ENCODE measurements at regions of chr1 and their contacts with region 1.

Region 1: GRCh38 chr1:152459596-152460528 is 45.8 kb upstream of the CRNN start:
- DNase-seq: peak; percentile 55 to 81 (median 61)
- H3K4me3 ChIP-seq: peak overlapping the region; percentile 36
- H3K4me3 Mint-ChIP-seq: peak overlapping the region; percentile 5 to 84 (median 72)
- H3K27ac ChIP-seq: no peak overlapping the region
- H3K27ac Mint-ChIP-seq: peak overlapping the region; percentile 25 to 98 (median 87)
- H3K4me1 ChIP-seq: peaks cover 15% of the 10 kb centered on the region
- H3K4me1 Mint-ChIP-seq: peaks cover 22 to 31% (median 29%) of the 10 kb centered on the region in 3 donors
- H3K27me3 ChIP-seq: no peaks in the 10 kb centered on the region
- H3K27me3 Mint-ChIP-seq: peaks cover 0 to 8% of the 10 kb centered on the region in 2 donors

Region 2: DNA sequence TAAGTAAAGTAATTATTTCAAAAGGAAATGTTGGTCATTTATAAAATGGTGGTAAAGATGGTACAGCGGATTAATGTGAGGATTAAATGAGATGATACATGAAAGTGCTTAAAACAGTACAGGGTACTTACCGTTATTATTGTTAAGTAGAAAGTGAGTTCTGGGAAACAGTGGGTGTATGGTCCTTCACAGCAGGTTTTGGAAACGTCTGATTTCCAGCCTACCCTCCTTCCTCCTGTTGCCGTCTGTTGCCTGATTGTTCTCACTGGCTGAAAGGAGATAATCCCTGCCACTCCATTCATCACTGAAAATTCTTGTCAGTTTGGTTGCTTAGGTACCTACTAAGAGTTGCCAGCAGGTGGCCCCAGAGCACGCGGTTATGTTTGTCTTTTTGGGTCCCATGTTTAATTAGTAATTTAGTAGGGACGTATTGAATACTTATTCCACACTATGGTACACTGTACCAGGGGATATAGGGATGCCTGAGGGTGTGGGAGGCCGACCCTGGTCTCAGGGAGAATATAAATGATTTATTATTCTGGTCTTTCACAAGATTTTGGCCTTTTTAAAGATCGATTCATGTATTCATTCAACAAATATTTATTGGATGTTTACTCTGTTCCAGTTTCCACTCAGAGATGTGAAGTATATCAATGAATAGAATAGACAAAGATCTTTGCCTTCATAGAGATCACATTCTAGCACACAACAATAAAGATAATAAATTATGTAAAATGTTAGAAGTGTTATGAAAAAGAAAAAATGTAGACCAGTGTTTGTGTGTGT is 270.0 kb before region 1 on chr1:
- CTCF ChIA-PET with region 1: interaction called, 146 read pairs
- POLR2A ChIA-PET with region 1: interaction called, 6 read pairs
- DNase-seq: peak; percentile 45 to 74 (median 50)
- H3K4me3 ChIP-seq: peak overlapping the region; percentile 57
- H3K4me3 Mint-ChIP-seq: peak overlapping the region; percentile 78 to 91 (median 84)
- H3K27ac ChIP-seq: no peak overlapping the region
- H3K27ac Mint-ChIP-seq: peak overlapping the region in 4 of 8 donors; percentile 5 to 70 (median 47)
- H3K4me1 ChIP-seq: peaks cover 5% of the 10 kb centered on the region
- H3K4me1 Mint-ChIP-seq: peaks cover 5 to 15% (median 10%) of the 10 kb centered on the region in 3 donors
- H3K27me3 ChIP-seq: no peaks in the 10 kb centered on the region
- H3K27me3 Mint-ChIP-seq: peaks cover 0 to 3% of the 10 kb centered on the region in 2 donors

Region 3: DNA sequence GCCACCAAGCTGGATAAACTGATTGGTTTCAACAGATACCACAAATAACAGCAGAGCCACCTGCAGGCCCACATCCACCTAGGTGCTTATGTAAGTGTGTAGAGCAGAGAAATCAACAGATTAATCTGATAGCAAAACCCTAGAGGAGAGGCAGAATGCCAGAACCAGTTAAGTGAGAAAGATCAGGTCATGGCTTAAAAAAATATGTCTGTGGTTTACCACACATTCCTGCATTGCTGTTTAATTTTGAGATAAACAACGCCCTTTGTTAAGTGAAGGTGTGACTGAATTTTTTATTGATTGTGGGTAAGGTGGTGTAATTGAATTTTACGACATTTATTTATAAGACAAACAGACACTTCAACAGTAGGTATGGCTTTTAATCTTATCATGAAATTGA is 67.0 kb before region 1 on chr1:
- CTCF ChIA-PET with region 1: interaction called, 36 read pairs
- POLR2A ChIA-PET with region 1: no interaction called
- DNase-seq: peak in 2 of 5 donors; percentile 53 to 62
- H3K4me3 ChIP-seq: no peak overlapping the region
- H3K4me3 Mint-ChIP-seq: peak overlapping the region in 5 of 7 donors; percentile 3 to 36 (median 30)
- H3K27ac ChIP-seq: no peak overlapping the region
- H3K27ac Mint-ChIP-seq: peak overlapping the region in 4 of 8 donors; percentile 10 to 85 (median 50)
- H3K4me1 ChIP-seq: peaks cover 4% of the 10 kb centered on the region
- H3K4me1 Mint-ChIP-seq: peaks cover 30 to 38% (median 33%) of the 10 kb centered on the region in 3 donors
- H3K27me3 ChIP-seq: peaks cover 6% of the 10 kb centered on the region
- H3K27me3 Mint-ChIP-seq: peaks cover 20 to 33% of the 10 kb centered on the region in 2 donors

Region 4: GRCh38 chr1:152440635-152441471 is 19.0 kb before region 1 on chr1:
- CTCF ChIA-PET with region 1: interaction called, 29 read pairs
- POLR2A ChIA-PET with region 1: no interaction called
- DNase-seq: peak; percentile 40 to 80 (median 52)
- H3K4me3 ChIP-seq: no peak overlapping the region
- H3K4me3 Mint-ChIP-seq: no peak overlapping the region
- H3K27ac ChIP-seq: no peak overlapping the region
- H3K27ac Mint-ChIP-seq: peak overlapping the region in 2 of 8 donors; percentile 39 to 79
- H3K4me1 ChIP-seq: no peaks in the 10 kb centered on the region
- H3K4me1 Mint-ChIP-seq: peaks cover 3 to 6% (median 4%) of the 10 kb centered on the region in 3 donors
- H3K27me3 ChIP-seq: no peaks in the 10 kb centered on the region
- H3K27me3 Mint-ChIP-seq: peaks cover 10 to 32% of the 10 kb centered on the region in 2 donors

Region 5: GRCh38 chr1:152473887-152474537 is 14.2 kb after region 1 on chr1:
- CTCF ChIA-PET with region 1: interaction called, 11 read pairs
- POLR2A ChIA-PET with region 1: no interaction called
- DNase-seq: no peak
- H3K4me3 ChIP-seq: no peak overlapping the region
- H3K4me3 Mint-ChIP-seq: no peak overlapping the region
- H3K27ac ChIP-seq: no peak overlapping the region
- H3K27ac Mint-ChIP-seq: no peak overlapping the region
- H3K4me1 ChIP-seq: no peaks in the 10 kb centered on the region
- H3K4me1 Mint-ChIP-seq: peaks cover 0 to 3% (median 0%) of the 10 kb centered on the region in 3 donors
- H3K27me3 ChIP-seq: peaks cover 4% of the 10 kb centered on the region
- H3K27me3 Mint-ChIP-seq: peaks cover 12 to 15% of the 10 kb centered on the region in 2 donors

Measured in CD8-positive, alpha-beta memory T cell (primary cell).